ENCODE measurements at regions of chr1 and their contacts with region 1.

Region 1: GRCh38 chr1:184954231-184954995 is 19.9 kb downstream of the NIBAN1 start:
- DNase-seq: no peak
- H3K4me3 Mint-ChIP-seq: peak overlapping the region; percentile 27
- H3K27ac Mint-ChIP-seq: peak overlapping the region; percentile 67
- H3K4me1 Mint-ChIP-seq: peaks cover 17% of the 10 kb centered on the region
- H3K27me3 Mint-ChIP-seq: no peaks in the 10 kb centered on the region

Region 2: DNA sequence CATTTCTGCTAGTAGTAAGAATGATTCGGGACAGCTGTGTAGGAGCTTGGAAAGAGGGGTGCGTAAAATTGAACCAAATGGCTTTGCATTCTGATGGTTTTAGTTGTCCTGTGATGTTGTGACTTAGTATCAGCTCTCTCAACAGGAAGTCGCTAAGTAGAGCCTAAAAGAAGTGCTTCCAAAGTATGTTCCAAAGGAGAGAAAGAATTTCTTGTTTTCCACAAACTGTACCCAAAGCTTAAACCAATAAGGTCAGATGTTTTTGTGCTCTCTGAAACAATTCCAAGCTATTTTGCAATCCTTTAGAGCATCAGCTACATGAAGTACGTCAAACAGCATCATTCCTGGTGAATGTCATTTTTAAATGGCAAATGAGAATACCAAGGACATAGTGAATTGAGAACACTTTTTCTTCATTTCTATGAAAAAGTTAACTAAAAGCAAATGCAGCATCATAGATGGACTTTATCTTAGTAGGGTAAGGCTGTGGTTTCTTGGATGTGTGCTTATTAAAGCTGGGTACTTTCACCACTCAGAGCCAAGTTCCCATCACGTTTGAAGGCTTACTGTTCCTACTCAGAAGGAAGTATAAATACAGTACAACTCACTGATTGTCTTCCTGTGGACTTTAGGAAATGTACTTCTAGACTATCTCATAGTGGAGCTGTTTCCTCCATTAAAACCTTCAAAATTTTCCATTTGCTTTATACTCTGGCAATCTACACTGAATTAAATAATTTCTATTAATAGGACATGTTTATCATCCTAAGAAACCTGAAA is 419.0 kb before region 1 on chr1:
- intact Hi-C with region 1: no loop called
- DNase-seq: no peak
- H3K4me3 Mint-ChIP-seq: no peak overlapping the region
- H3K27ac Mint-ChIP-seq: no peak overlapping the region
- H3K4me1 Mint-ChIP-seq: peaks cover 3% of the 10 kb centered on the region
- H3K27me3 Mint-ChIP-seq: peaks cover 11% of the 10 kb centered on the region

Region 3: GRCh38 chr1:184743062-184743756 is 211.2 kb before region 1 on chr1:
- intact Hi-C with region 1: no loop called
- DNase-seq: peak; percentile 33
- H3K4me3 Mint-ChIP-seq: peak overlapping the region; percentile 58
- H3K27ac Mint-ChIP-seq: peak overlapping the region; percentile 82
- H3K4me1 Mint-ChIP-seq: peaks cover 56% of the 10 kb centered on the region
- H3K27me3 Mint-ChIP-seq: no peaks in the 10 kb centered on the region

Region 4: DNA sequence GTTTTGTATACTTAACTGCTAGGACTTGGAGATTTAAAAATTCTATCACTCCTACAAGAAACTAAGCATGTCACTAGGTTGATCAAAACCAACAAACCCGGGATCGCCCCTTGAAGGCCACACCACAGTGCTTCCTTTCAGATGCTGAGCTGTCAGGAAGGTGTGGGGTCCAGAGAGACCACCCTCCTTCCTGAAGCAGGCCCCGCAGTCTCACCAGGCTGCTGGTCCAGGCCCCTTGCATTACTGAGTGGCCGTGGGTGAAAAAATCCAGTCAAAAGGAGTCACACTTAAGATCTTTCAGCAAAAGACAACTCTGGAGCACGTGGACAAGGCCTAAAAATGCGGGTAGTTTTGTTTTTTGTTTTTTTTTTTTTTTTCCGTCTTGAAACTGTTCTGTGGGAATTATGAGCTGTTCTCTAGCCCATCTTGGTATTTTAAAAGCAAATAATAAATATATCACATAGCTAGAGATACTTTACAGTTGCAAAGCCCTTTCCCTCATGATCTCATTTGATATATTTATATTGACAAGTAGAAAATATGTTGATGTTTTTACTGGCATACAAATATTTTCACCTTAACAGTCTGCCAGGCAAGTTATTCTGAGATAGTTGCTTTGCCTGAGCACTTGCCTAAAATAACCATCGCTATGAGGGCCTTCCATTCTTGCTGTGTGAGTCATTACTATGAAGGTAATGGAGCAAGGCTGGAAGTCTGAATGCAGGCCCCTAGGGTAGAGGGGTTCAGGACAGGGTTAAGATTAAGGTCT is 126.6 kb before region 1 on chr1:
- intact Hi-C with region 1: no loop called
- DNase-seq: no peak
- H3K4me3 Mint-ChIP-seq: no peak overlapping the region
- H3K27ac Mint-ChIP-seq: no peak overlapping the region
- H3K4me1 Mint-ChIP-seq: peaks cover 17% of the 10 kb centered on the region
- H3K27me3 Mint-ChIP-seq: no peaks in the 10 kb centered on the region

Region 5: DNA sequence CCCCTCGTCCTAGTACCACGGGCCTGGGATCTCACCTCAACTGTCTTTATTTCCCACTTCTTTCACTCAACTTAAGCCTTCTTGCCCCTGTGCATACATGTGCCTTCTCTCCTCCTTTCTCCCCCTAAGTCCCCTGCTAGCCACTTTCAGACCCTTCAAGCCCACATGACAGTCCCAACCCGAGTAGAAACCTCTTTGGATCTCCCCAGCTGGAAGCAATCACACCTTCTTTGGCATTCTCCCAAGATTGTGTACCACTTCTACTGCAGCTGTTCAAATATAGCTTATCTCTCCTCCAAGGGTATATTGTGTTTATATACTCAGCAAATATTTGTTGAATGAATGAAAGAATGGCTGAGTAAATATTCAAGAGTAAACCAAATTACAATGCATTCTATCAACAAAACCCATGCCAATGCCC is 48.9 kb before region 1 on chr1:
- intact Hi-C with region 1: loop called (anchors 5 kb)
- DNase-seq: no peak
- H3K4me3 Mint-ChIP-seq: no peak overlapping the region
- H3K27ac Mint-ChIP-seq: no peak overlapping the region
- H3K4me1 Mint-ChIP-seq: peaks cover 9% of the 10 kb centered on the region
- H3K27me3 Mint-ChIP-seq: peaks cover 5% of the 10 kb centered on the region

Region 6: DNA sequence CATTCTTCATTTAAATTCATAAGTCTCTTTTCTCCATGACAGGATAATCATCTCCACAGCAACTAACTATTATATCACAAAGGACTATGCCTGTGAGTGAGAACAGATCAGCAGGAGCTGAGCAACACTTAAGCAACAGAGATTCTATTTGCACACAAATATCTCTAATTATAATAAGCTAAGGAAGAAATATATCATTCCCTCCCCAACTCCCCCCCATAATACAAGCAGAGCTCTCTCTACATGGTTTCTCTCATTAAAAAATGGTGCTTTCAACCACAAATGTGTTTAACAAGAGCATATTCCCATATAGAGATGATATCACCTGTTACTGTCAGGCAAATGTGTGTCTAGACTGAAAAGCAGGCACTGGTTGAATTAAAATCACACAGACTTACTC is 54.4 kb after region 1 on chr1:
- intact Hi-C with region 1: no loop called
- DNase-seq: no peak
- H3K4me3 Mint-ChIP-seq: no peak overlapping the region
- H3K27ac Mint-ChIP-seq: no peak overlapping the region
- H3K4me1 Mint-ChIP-seq: no peaks in the 10 kb centered on the region
- H3K27me3 Mint-ChIP-seq: no peaks in the 10 kb centered on the region

Measured in activated T-helper 2 cell treated with anti-CD3 and anti-CD28 coated beads, Interferon-gamma antibody, Interleukin-2, Interleukin-4, amounts not matched to agents 10 μg/mL and 5 μg/mL and 100 μg/mL, durations not matched to agents 14 hours and 24 hours and 36 hours (primary cell).